ENCODE measurements at regions of chr14 and their contacts with region 1.

Region 1: GRCh38 chr14:50116181-50116956 is at the start of gene VCPKMT:
- DNase-seq: peak; percentile 90 to 98 (median 96)
- ATAC-seq: peak; percentile 98
- H3K4me3 ChIP-seq: peak within 1 kb of the TSS; percentile 75
- H3K4me3 Mint-ChIP-seq: peak within 1 kb of the TSS; percentile 99
- H3K27ac ChIP-seq: peak within 1 kb of the TSS; percentile 81 to 95
- H3K27ac Mint-ChIP-seq: peak within 1 kb of the TSS; percentile 99
- H3K4me1 ChIP-seq: peaks cover 15% of the 10 kb centered on the region
- H3K4me1 Mint-ChIP-seq: peaks cover 31% of the 10 kb centered on the region
- H3K27me3 ChIP-seq: no peaks in the 10 kb centered on the region
- H3K27me3 Mint-ChIP-seq: no peaks in the 10 kb centered on the region
- CTCF ChIP-seq: no peak
- total RNA-seq, gene VCPKMT: 30.4 to 32.4 TPM

Region 2: DNA sequence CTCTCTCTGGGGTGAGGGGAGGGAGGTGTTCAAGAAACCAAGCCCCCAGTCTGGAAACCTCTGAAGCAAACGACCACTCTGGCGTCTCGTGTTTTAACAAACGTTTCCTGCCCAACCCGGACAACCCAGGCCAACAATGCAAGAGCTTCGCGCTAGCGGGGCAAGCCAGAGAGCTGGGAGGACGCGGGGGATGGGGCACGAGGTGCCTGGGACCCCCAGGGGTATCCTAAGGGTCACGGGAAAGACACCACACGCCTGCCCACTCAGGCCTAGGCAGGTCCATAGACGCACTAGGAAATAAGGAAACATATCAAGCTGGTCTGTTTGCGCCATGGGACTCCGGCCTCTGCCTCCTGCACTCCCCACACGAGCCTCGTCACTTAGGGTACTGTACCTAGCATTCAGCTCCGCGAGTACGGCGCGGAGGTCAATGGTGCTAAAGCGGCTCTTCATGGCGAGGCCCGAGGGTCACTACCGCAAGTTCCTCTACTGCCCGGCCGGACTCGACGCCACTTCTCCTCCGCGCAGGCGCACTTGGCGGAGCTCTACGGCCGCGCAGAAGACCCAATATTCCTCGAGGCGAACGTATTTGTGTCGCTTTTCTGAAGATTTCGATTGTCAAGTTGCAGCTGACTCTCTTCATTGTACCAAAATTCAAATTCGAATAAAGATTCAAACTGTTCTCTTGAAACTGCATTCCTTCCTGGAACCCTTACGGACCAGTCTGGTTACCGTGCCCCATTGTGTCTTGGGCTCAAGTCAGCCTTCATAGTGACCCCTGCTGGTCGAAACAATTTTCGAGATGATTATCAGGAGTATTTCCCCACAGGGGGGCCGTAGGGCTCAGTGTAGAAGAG is 263.8 kb before region 1 on chr14 and contains the start of gene NEMF:
- CTCF ChIA-PET with region 1: interaction called, 11 read pairs
- POLR2A ChIA-PET with region 1: interaction called, 46 read pairs
- intact Hi-C with region 1: no loop called
- DNase-seq: peak; percentile 67 to 91 (median 72)
- ATAC-seq: peak; percentile 75
- H3K4me3 ChIP-seq: peak within 1 kb of the TSS; percentile 97
- H3K4me3 Mint-ChIP-seq: peak within 1 kb of the TSS; percentile 99
- H3K27ac ChIP-seq: peak within 1 kb of the TSS; percentile 64 to 80
- H3K27ac Mint-ChIP-seq: peak within 1 kb of the TSS; percentile 91
- H3K4me1 ChIP-seq: peaks cover 17% of the 10 kb centered on the region
- H3K4me1 Mint-ChIP-seq: peaks cover 46% of the 10 kb centered on the region
- H3K27me3 ChIP-seq: no peaks in the 10 kb centered on the region
- H3K27me3 Mint-ChIP-seq: no peaks in the 10 kb centered on the region
- CTCF ChIP-seq: peak; percentile 89
- total RNA-seq, gene NEMF: 96.0 to 97.7 TPM

Region 3: GRCh38 chr14:50231475-50232275 is 115.3 kb after region 1 on chr14 and contains the start of gene SOS2:
- CTCF ChIA-PET with region 1: interaction called, 5 read pairs
- POLR2A ChIA-PET with region 1: no interaction called
- intact Hi-C with region 1: loop called in 1 of 2 experiments (anchors 5 kb)
- DNase-seq: peak; percentile 66 to 91 (median 81)
- ATAC-seq: peak; percentile 80
- H3K4me3 ChIP-seq: peak within 1 kb of the TSS; percentile 85
- H3K4me3 Mint-ChIP-seq: peak within 1 kb of the TSS; percentile 91
- H3K27ac ChIP-seq: peak within 1 kb of the TSS; percentile 83 to 86
- H3K27ac Mint-ChIP-seq: peak within 1 kb of the TSS; percentile 92
- H3K4me1 ChIP-seq: peaks cover 24% of the 10 kb centered on the region
- H3K4me1 Mint-ChIP-seq: peaks cover 57% of the 10 kb centered on the region
- H3K27me3 ChIP-seq: no peaks in the 10 kb centered on the region
- H3K27me3 Mint-ChIP-seq: no peaks in the 10 kb centered on the region
- CTCF ChIP-seq: no peak
- total RNA-seq, gene SOS2: 53.8 to 56.7 TPM

Region 4: DNA sequence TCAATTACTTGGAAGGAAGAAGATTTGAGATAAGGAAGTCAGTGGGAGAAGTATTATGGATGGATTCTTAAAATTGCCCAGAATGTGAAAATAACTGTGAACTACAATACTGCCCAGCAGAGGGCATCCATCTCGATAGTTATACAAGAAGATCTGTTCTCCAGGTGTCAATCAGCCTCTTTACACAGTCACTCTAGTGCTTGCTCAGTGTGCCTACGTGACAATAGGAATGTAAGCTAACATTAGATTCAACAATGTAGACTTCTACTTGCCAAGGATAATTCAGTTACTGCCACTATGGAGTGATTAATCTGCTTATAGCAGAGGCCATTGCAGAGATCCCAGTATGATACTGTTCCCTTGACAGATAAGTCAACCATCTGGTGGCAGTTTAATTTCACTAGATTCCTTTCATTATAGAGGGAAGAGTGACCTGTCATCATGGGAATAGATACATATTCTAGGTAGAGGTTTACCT is 426.6 kb after region 1 on chr14:
- CTCF ChIA-PET with region 1: no interaction called
- POLR2A ChIA-PET with region 1: no interaction called
- intact Hi-C with region 1: no loop called
- DNase-seq: peak in 7 of 14 experiments; percentile 13 to 71 (median 53)
- ATAC-seq: peak; percentile 80
- H3K4me3 ChIP-seq: no peak overlapping the region
- H3K4me3 Mint-ChIP-seq: no peak overlapping the region
- H3K27ac ChIP-seq: no peak overlapping the region
- H3K27ac Mint-ChIP-seq: no peak overlapping the region
- H3K4me1 ChIP-seq: no peaks in the 10 kb centered on the region
- H3K4me1 Mint-ChIP-seq: peaks cover 14% of the 10 kb centered on the region
- H3K27me3 ChIP-seq: no peaks in the 10 kb centered on the region
- H3K27me3 Mint-ChIP-seq: no peaks in the 10 kb centered on the region
- CTCF ChIP-seq: peak; percentile 72

Measured in CD4-positive, alpha-beta T cell (primary cell).